ENCODE measurements at regions of chr1 and their contacts with region 1.

Region 1: DNA sequence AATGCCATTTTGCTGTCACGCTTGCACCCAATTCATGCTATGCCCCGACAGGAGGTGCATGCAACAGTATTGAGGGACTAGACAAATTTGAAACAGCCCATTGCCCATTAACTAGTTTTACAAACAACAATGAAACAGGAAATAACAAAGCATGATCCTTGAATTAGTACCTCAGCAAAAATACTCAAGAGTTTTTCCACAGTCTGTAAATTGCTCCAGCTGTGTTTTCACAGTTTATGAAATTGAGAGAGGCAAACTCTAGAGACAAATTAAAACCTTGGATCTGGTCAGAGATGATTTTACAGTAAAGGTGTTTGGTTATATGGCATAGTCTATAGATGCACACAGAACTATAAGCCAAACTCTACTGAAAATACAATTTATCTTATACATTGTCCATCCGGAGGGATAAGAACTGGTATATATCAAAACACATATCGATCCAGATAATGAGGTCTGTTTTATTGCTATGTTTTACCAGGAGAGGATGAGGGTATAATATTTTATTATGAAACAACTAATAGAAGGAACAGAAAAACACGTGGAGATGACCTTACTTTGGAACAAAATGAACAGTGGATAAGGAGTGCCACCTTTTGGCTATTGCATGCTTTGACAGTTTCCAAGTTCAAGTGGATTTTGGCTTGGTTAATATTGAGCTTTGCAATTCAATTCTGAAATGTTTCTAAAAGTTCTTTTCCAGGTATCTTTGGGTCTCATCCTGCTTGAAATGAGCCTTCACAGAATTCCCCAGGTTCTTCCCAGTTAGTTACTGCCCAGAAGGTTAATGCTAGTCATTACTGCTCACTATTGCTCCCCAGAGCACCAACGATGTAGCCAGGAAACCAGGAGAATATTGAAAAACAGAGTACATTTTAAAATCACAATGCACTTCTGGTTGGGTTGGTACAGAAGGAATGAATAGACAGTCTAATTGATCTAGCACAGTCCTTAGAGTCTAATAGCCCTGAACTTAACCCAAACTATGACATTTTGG is 45.7 kb downstream of the ZC3H11B start:
- DNase-seq: peak; percentile 26
- H3K4me3 ChIP-seq: no peak overlapping the region; a peak in 1 of 4 replicates
- H3K27ac ChIP-seq: peak overlapping the region in 1 of 2 experiments; percentile 32; a peak in 2 of 4 replicates
- H3K4me1 ChIP-seq: peaks cover 5 to 6% of the 10 kb centered on the region in 2 experiments; a peak in 2 of 4 replicates
- H3K27me3 ChIP-seq: no peaks in the 10 kb centered on the region
- CTCF ChIP-seq: peak; percentile 87
- EP300 ChIP-seq: peak in 1 of 2 experiments; percentile 38; a peak in 1 of 4 replicates
- RAD21 ChIP-seq: peak; percentile 95

Region 2: GRCh38 chr1:218339267-218339831 is 1227.9 kb before region 1 on chr1:
- CTCF ChIA-PET with region 1: interaction called, 14 read pairs
- POLR2A ChIA-PET with region 1: no interaction called
- DNase-seq: no peak
- H3K4me3 ChIP-seq: no peak overlapping the region; a peak in 1 of 4 replicates
- H3K27ac ChIP-seq: peak overlapping the region in 1 of 2 experiments; percentile 6; a peak in 1 of 4 replicates
- H3K4me1 ChIP-seq: peaks cover 0 to 11% of the 10 kb centered on the region in 2 experiments; a peak in 2 of 4 replicates
- H3K27me3 ChIP-seq: no peaks in the 10 kb centered on the region
- CTCF ChIP-seq: peak; percentile 83
- EP300 ChIP-seq: no peak
- RAD21 ChIP-seq: peak; percentile 80

Region 3: GRCh38 chr1:219385786-219386427 is 181.3 kb before region 1 on chr1:
- CTCF ChIA-PET with region 1: interaction called, 14 read pairs
- POLR2A ChIA-PET with region 1: no interaction called
- DNase-seq: peak; percentile 23
- H3K4me3 ChIP-seq: no peak overlapping the region
- H3K27ac ChIP-seq: no peak overlapping the region
- H3K4me1 ChIP-seq: peaks cover 0 to 9% of the 10 kb centered on the region in 2 experiments; a peak in 2 of 4 replicates
- H3K27me3 ChIP-seq: no peaks in the 10 kb centered on the region
- CTCF ChIP-seq: peak; percentile 69
- EP300 ChIP-seq: peak in 1 of 2 experiments; percentile 12; a peak in 1 of 4 replicates
- RAD21 ChIP-seq: peak; percentile 78

Region 4: DNA sequence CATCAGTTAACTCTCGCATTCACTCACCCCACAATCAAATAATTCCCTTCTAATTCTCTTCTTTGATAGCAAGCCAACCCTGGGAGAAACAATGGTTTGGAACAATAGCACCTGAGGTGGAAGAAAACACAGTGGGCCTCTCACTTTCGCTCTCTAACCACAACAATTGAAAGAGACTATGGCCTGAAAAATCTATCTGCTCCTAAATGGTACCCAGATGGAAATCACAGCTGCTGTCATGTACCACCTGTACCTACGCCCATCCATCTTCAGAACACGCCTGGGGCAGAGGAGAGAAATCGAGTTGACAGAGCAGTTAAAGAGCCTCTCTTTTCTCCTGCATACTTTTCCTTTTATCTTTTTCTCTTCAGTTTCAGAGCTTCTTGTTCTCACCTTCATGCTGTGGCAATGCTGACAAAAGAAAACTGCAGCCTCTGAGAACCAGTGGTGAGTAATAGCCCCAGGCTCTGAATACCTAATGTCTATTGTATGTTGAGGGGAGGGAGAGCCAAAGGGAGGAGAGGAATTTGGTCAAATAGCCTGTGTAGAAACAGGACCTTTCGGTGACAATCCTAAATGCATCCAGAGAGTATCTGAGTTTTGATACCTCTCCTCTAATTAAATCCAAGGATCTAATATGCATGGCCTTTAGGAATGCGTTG is 12.1 kb before region 1 on chr1:
- CTCF ChIA-PET with region 1: interaction called, 22 read pairs
- POLR2A ChIA-PET with region 1: no interaction called
- DNase-seq: no peak
- H3K4me3 ChIP-seq: no peak overlapping the region
- H3K27ac ChIP-seq: peak overlapping the region in 1 of 2 experiments; percentile 37; a peak in 1 of 4 replicates
- H3K4me1 ChIP-seq: 0 out of 4 replicates have a peak, but pooled peaks cover 0 to 4% of the 10 kb centered on the region in 2 experiments
- H3K27me3 ChIP-seq: no peaks in the 10 kb centered on the region
- CTCF ChIP-seq: no peak
- EP300 ChIP-seq: no peak
- RAD21 ChIP-seq: no peak

Region 5: DNA sequence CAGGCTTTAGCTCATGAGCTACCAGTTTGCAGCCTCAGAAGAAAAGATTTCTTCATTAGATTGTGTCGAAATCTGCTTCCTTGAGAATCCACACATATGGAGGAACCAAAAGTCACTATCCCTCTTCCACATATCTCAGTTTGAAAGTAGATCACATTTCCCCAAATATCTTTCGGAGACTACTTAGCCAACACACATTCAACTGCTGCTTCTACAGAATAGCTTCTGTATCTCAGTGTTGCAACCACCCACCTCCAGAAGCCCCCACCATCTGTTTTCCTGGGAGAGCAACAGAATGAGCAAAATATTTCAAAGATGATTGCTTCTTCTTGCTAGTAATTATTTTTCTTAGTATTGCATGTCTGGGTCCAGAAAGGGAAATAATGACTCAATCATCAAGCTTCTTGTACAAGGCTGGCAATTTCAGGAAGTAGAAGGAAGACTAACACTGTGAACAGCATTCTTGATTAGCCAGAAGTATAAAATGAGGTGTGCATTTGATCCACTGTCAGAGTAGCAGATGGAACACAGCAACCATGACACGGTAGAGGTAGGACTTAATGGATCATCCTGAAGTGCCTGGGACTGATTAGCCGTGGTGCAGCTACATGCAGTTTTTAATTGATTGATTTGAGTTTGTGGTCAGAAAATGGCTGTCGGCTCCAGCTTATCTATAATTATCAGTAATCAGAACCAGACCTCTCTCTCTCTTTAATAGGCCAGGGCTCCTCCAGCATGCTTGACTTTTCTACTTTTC is 20.7 kb after region 1 on chr1:
- CTCF ChIA-PET with region 1: interaction called, 14 read pairs
- POLR2A ChIA-PET with region 1: no interaction called
- DNase-seq: peak; percentile 70
- H3K4me3 ChIP-seq: no peak overlapping the region
- H3K27ac ChIP-seq: peak overlapping the region in 1 of 2 experiments; percentile 95; a peak in 3 of 4 replicates
- H3K4me1 ChIP-seq: peaks cover 6 to 25% of the 10 kb centered on the region in 2 experiments; a peak in 3 of 4 replicates
- H3K27me3 ChIP-seq: no peaks in the 10 kb centered on the region
- CTCF ChIP-seq: no peak
- EP300 ChIP-seq: peak; percentile 67 to 95; a peak in 3 of 4 replicates
- RAD21 ChIP-seq: peak; percentile 8; the same call in 1 of the 2 replicates